Activated T-helper 1 cell treated with anti-CD3 and anti-CD28 coated beads, Interleukin-12 subunit alpha, Interleukin-12 subunit beta, Interleukin-2, Interleukin-4 antibody, amounts not matched to agents 30 ng/mL and 10 ng/mL and 1 ng/mL, durations not matched to agents 14 hours and 24 hours and 36 hours (primary cell): ENCODE measurements at regions of chr5 and their contacts with region 1.

Region 1: DNA sequence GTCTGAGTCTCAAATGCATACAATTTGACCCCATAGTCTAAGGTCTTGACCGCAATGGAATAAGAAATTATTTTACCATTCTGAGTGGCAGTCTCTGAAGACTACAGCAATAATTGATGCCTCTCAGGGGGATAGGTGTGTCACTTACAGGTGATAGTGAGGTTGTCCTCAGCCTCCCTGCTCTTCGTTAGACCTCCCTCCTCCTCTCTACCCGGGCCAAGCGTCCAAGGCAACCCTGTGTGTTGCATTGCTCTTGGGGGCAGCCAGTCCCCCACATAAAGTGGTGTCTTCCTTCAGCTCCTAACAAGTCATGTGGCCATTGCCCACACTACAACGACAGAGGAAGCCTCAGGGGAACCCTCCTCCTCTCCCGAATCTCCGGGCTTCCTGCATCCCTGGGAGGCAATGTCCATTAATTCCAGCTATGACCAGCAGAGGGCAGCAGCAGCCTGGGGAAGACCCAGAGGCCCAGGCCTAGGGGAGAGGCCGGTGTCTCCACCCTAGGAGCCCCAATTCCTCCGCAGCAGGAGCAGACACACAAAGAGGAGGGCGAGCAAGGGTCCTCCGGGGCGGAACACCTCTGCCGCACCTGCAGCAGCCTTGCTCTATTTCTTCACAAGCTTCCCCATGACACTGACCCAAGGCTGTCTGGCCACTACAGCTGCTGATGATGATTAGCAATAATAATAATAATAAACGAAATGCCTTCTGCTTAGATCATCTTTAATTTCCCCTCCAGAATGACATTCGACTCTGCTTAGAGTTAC is 134.8 kb downstream of the KCNIP1 start:
- DNase-seq: peak; percentile 38
- H3K4me3 Mint-ChIP-seq: no peak overlapping the region
- H3K27ac Mint-ChIP-seq: no peak overlapping the region
- H3K4me1 Mint-ChIP-seq: no peaks in the 10 kb centered on the region
- H3K27me3 Mint-ChIP-seq: peaks cover 13% of the 10 kb centered on the region

Region 2: DNA sequence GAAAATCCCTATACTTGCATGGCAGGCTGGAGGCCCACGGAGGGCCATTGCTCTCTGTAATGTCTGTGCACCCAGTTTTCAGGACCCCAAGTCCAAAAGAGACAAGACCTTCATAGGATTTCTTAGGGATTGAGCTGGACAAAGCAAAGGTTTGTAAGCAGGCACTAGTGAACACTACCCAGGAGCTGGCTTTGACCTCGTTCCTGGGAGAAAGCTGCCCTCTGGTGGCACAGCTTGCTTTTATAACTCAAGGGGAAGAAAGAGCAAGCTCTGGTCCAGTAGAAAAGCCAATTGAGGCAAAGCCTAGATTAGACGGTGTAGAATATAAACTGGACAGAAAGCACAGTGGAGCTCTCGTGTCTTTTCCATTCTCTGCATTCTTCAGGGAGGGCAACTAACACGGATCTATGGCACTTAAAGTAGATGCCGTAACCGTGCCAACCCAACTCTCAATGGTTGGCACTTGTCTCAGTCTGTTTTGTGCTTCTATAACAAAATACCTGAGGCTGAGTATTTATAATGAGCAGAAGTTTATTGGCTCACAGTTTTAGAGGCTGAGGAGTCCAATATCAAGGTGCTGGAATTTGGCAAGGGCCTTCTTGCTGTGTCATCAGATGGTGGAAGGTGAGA is 152.8 kb after region 1 on chr5:
- intact Hi-C with region 1: loop called (anchors 1 kb)
- DNase-seq: no peak
- H3K4me3 Mint-ChIP-seq: no peak overlapping the region
- H3K27ac Mint-ChIP-seq: no peak overlapping the region
- H3K4me1 Mint-ChIP-seq: no peaks in the 10 kb centered on the region
- H3K27me3 Mint-ChIP-seq: peaks cover 2% of the 10 kb centered on the region

Region 3: GRCh38 chr5:171166766-171167165 is 528.1 kb after region 1 on chr5:
- intact Hi-C with region 1: no loop called
- DNase-seq: no peak
- H3K4me3 Mint-ChIP-seq: no peak overlapping the region
- H3K27ac Mint-ChIP-seq: no peak overlapping the region
- H3K4me1 Mint-ChIP-seq: no peaks in the 10 kb centered on the region
- H3K27me3 Mint-ChIP-seq: no peaks in the 10 kb centered on the region

Region 4: GRCh38 chr5:171336521-171337209 is 698.0 kb after region 1 on chr5:
- intact Hi-C with region 1: loop called (anchors 2 kb)
- DNase-seq: no peak
- H3K4me3 Mint-ChIP-seq: peak overlapping the region; percentile 37
- H3K27ac Mint-ChIP-seq: no peak overlapping the region
- H3K4me1 Mint-ChIP-seq: no peaks in the 10 kb centered on the region
- H3K27me3 Mint-ChIP-seq: peaks cover 19% of the 10 kb centered on the region